ENCODE measurements at regions of chr1 and their contacts with region 1.

Region 1: DNA sequence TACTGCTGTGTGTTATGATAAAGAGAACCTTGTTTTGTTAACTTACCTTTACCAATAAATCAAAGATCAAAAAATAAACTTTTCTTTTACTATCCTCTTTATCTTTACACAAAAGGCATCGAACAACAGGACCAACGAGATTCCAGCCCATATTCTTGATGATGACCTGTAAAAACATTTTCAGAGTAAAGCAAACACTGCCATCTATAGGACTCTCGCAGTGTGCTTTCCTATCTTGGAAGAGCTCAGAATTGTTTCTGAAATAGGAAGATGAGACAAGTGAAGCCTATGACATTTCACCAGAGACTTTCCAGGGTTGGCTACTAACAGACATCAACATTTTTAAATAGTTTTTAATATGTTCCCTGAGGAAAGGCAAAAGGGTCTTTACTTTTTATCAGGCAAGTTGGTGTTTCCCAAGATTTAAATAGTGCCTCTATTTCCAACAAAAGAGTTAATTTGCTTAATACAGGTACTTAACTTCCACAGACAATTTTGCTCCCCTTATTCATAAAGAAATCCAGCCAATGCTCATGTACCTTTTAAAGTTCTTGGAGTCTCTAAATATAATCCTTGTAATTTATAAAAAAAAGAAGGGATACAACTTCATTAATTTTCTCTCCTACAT is 7.3 kb downstream of the GLMN start:
- DNase-seq: peak; percentile 63
- H3K4me3 Mint-ChIP-seq: no peak overlapping the region
- H3K27ac Mint-ChIP-seq: no peak overlapping the region
- H3K4me1 Mint-ChIP-seq: peaks cover 6% of the 10 kb centered on the region
- H3K27me3 Mint-ChIP-seq: no peaks in the 10 kb centered on the region
- CTCF ChIP-seq: peak; percentile 67

Region 2: DNA sequence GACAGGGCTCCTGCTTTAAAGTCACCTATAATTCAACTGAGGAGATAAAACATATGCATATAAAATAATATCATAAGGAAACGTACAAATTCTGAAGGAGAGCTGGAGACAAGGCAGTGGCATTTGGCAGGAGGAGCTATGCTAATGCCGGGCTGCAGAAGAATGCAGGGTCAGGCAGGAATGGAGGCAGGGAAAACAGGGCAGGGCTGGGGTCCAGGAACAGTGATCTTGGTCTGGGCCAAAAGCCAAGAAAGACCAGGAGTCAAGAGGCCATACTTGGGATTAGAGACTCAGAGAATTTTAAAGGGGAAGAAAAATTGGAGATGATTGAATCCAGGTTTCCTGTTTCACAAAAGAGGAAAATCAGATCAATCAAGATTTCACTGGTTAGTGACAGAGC is 362.2 kb before region 1 on chr1:
- CTCF ChIA-PET with region 1: interaction called, 5 read pairs
- POLR2A ChIA-PET with region 1: interaction called, 3 read pairs
- intact Hi-C with region 1: loop called (anchors 5 kb)
- DNase-seq: no peak
- H3K4me3 Mint-ChIP-seq: no peak overlapping the region
- H3K27ac Mint-ChIP-seq: no peak overlapping the region
- H3K4me1 Mint-ChIP-seq: peaks cover 13% of the 10 kb centered on the region
- H3K27me3 Mint-ChIP-seq: no peaks in the 10 kb centered on the region
- CTCF ChIP-seq: no peak

Region 3: DNA sequence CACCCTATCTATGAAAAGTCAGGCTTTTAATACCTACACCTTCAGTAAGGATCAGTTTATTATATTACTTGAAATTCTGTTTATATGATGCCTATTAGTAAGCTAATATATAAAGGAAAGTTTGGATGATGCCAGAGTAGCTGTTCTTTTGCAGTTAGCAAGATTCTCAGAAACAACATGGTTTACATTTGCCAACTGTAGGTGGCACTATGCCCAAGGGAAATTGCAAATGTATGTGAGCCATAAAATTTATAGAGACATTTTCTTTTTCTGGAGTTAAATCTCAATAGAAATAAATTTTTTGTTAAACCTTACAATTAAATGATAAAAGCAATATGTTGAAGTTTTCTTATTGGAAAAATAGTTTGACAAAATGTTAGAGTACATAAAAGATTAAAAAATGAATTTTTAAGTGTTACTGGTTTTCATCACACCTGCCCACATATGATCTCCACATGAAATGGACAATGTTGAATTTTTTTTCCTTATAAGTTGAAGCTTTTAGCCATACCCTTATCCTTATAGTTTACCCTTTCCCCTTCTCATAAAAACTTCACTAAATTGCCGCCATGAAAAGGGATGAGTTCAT is 293.8 kb before region 1 on chr1:
- CTCF ChIA-PET with region 1: interaction called, 26 read pairs
- POLR2A ChIA-PET with region 1: interaction called, 4 read pairs
- intact Hi-C with region 1: loop called (anchors 1 kb)
- DNase-seq: peak; percentile 75
- H3K4me3 Mint-ChIP-seq: no peak overlapping the region
- H3K27ac Mint-ChIP-seq: no peak overlapping the region
- H3K4me1 Mint-ChIP-seq: no peaks in the 10 kb centered on the region
- H3K27me3 Mint-ChIP-seq: no peaks in the 10 kb centered on the region
- CTCF ChIP-seq: peak; percentile 55